Activated CD4-positive, alpha-beta T cell treated with anti-CD3 and anti-CD28 coated beads, Interleukin-2, amount 10 ng/mL, durations not matched to agents 24 days and 14 days (primary cell): ENCODE measurements at regions of chr17 and their contacts with region 1.

Region 1: GRCh38 chr17:57130761-57131461 is 45.9 kb downstream of the AKAP1 start:
- DNase-seq: peak; percentile 93
- H3K4me3 Mint-ChIP-seq: no peak overlapping the region
- H3K27ac Mint-ChIP-seq: no peak overlapping the region
- H3K4me1 Mint-ChIP-seq: peaks cover 4% of the 10 kb centered on the region
- H3K27me3 Mint-ChIP-seq: no peaks in the 10 kb centered on the region

Region 2: DNA sequence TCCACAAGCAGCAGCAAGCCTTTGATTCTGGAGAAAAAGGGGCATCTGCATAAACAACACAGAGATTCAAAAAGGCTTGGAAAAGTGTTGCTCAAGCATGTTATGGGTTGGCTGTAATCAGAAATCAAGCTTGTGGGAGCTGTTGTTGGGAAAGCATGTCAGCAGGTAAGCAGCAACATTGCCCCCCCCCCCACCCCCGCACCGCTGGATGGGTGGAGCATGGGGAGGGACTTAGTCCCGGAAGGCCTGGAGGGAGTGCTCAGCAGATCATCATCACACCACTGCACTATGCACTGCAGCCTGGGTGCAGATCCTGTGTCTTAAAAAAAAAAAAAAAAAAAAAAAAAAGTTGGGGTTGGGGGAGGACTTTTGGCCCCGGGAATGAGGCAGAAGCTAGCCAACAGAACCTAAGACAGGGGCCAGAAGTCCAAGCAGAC is 62.7 kb before region 1 on chr17:
- intact Hi-C with region 1: no loop called
- DNase-seq: no peak
- H3K4me3 Mint-ChIP-seq: no peak overlapping the region
- H3K27ac Mint-ChIP-seq: no peak overlapping the region
- H3K4me1 Mint-ChIP-seq: no peaks in the 10 kb centered on the region
- H3K27me3 Mint-ChIP-seq: peaks cover 24% of the 10 kb centered on the region

Region 3: GRCh38 chr17:57671667-57672632 is 541.0 kb after region 1 on chr17:
- intact Hi-C with region 1: loop called (anchors 2 kb)
- DNase-seq: peak; percentile 89
- H3K4me3 Mint-ChIP-seq: no peak overlapping the region
- H3K27ac Mint-ChIP-seq: no peak overlapping the region
- H3K4me1 Mint-ChIP-seq: peaks cover 18% of the 10 kb centered on the region
- H3K27me3 Mint-ChIP-seq: no peaks in the 10 kb centered on the region

Region 4: DNA sequence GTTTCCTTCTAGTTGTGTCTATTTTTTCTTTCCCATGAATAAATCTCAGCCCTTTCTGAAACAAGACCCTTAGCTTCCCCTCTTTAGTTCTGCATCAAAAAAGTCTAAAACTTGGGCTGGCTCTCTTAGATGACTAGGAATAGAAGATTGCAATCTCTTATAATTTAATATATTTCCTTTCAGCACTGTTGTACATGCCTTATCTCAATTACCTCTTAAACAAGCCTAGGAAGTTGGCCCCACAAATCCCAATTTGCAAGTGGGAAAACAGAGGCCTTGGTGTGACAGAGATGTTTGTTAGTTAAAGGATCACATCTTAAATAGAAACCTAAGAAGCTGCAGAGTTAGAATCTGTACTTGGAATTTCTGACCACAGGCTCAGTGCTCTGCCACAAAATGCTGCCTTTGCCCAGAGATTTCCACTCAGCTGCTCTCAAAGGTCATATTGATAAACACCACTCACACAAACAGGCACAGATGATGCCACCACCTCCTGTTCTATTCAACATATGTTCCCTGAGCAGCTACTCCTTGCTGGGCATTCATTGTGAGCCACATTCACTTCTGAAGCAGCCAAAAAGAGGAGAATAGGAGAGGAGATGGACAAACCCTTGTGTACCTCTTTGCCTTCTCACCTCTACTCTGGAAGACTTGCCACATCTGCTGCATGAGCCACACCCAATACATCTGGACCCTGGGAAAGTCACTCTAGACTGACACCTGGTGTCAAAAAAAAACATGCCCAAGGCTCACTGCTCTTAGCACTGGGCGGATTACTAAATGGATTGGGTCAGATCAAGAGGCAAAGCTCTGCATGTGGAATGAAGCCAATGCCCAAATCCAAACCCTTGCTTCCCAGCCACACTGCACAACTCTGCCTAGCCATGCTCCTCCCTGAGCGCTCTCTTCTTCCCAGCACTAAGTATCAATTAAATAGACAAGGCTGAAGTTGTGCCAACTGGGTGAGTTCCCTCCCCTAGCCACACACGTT is 608.8 kb after region 1 on chr17:
- intact Hi-C with region 1: loop called (anchors 1 kb)
- DNase-seq: peak; percentile 77
- H3K4me3 Mint-ChIP-seq: no peak overlapping the region
- H3K27ac Mint-ChIP-seq: no peak overlapping the region
- H3K4me1 Mint-ChIP-seq: peaks cover 3% of the 10 kb centered on the region
- H3K27me3 Mint-ChIP-seq: peaks cover 21% of the 10 kb centered on the region

Region 5: DNA sequence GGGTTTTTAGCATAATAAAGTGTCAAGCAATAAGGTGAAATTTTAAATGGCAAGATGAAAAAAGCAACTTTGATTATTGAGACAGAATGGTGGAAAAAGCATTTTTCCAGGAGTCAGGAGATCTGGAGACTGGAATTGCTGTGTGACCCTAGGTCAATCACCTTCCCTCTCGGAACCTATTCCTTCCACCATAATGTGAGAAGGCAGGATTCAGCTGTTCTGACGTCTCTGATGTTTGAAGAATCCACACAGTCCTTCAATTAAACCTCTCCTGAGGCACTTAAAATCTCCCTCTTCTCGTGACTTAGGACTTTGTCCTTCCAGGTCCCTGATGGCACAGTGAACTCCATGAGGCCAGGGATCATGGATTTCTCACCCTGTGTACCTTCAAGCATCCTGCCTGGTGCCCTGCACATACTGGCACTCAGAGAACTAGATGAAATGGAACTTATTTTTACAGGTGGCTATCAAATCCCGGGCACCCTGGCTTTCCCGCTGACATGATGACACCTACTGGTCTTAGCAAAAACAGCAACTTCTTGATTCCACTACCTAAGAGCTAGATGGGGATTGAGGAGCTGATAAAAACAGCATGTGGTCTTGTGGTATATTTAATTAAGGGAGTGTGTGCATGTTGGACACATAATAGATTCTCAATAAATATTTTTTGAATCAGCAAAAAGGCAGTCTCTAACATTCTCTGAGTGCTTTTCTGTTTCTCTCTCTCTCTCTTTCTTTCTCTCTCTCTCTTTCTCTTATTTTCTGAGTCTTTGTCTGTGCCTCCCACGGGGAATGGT is 616.5 kb after region 1 on chr17:
- intact Hi-C with region 1: loop called (anchors 1 kb)
- DNase-seq: peak; percentile 80
- H3K4me3 Mint-ChIP-seq: no peak overlapping the region
- H3K27ac Mint-ChIP-seq: no peak overlapping the region
- H3K4me1 Mint-ChIP-seq: peaks cover 4% of the 10 kb centered on the region
- H3K27me3 Mint-ChIP-seq: peaks cover 21% of the 10 kb centered on the region

Region 6: GRCh38 chr17:57783106-57783742 is 652.3 kb after region 1 on chr17:
- intact Hi-C with region 1: loop called (anchors 2 kb)
- DNase-seq: peak; percentile 95
- H3K4me3 Mint-ChIP-seq: no peak overlapping the region
- H3K27ac Mint-ChIP-seq: no peak overlapping the region
- H3K4me1 Mint-ChIP-seq: no peaks in the 10 kb centered on the region
- H3K27me3 Mint-ChIP-seq: peaks cover 23% of the 10 kb centered on the region

Region 7: GRCh38 chr17:57833179-57833939 is 702.4 kb after region 1 on chr17:
- intact Hi-C with region 1: loop called (anchors 1 kb)
- DNase-seq: peak; percentile 89
- H3K4me3 Mint-ChIP-seq: no peak overlapping the region
- H3K27ac Mint-ChIP-seq: no peak overlapping the region
- H3K4me1 Mint-ChIP-seq: peaks cover 5% of the 10 kb centered on the region
- H3K27me3 Mint-ChIP-seq: no peaks in the 10 kb centered on the region